ENCODE measurements at regions of chr20 and their contacts with region 1.

Region 1: GRCh38 chr20:20083807-20084206 is 31.5 kb downstream of the CFAP61 start:
- DNase-seq: peak in 1 of 2 donors; percentile 63
- ATAC-seq: peak; percentile 71 to 83 (median 79)
- H3K4me3 ChIP-seq: no peak overlapping the region
- H3K4me3 Mint-ChIP-seq: no peak overlapping the region
- H3K27ac ChIP-seq: no peak overlapping the region
- H3K27ac Mint-ChIP-seq: peak overlapping the region in 1 of 2 donors; percentile 65
- H3K4me1 ChIP-seq: peaks cover 4% of the 10 kb centered on the region
- H3K4me1 Mint-ChIP-seq: peaks cover 7 to 9% of the 10 kb centered on the region in 2 donors
- H3K27me3 ChIP-seq: peaks cover 2% of the 10 kb centered on the region
- H3K27me3 Mint-ChIP-seq: peaks cover 0 to 6% of the 10 kb centered on the region in 2 donors
- CTCF ChIP-seq: peak; percentile 75

Region 2: DNA sequence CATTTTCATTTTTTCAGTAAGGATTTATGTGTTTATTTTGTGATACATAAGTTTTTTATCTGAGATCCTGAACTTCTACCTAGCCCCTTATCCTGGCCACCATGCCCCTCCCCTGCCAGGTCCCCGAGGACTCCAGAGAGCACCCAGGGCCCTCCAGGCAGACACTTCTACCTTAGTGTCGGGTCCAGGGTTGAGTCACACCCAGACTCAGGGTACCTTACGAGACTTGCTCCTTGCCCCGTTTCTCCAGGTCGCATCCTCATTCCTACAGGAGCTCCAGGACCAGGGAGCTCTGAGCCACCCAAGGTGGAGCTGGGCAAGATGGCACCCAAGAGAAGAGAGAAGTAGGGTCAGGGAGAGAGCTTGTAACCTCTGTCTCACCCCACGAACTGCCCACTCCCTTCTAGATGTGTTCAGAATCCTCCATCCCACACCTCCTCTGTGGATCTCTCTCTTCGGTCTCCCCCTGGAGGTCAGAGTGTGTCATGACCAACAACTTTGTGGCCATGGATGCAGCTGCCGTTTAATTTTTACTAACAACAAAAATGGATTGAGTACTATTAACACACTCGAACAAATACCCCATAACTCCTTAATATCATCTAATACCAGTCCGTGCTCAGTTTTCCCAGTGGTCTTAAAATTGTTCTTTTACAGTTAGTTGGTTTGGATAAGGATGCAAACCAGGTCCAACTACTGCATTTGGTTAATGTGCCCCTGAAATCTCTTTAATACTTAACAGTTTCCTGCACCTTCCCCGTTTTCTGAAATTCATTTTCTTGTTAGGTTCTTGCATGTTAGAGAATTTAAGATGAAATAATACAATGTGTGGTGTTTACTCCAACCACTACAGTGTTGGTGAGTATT is 153.5 kb after region 1 on chr20:
- intact Hi-C with region 1: loop called (anchors 1 kb)
- DNase-seq: peak; percentile 40 to 62
- ATAC-seq: peak; percentile 79 to 98 (median 93)
- H3K4me3 ChIP-seq: no peak overlapping the region
- H3K4me3 Mint-ChIP-seq: no peak overlapping the region
- H3K27ac ChIP-seq: no peak overlapping the region
- H3K27ac Mint-ChIP-seq: peak overlapping the region; percentile 52 to 80
- H3K4me1 ChIP-seq: peaks cover 9% of the 10 kb centered on the region
- H3K4me1 Mint-ChIP-seq: peaks cover 12 to 20% of the 10 kb centered on the region in 2 donors
- H3K27me3 ChIP-seq: no peaks in the 10 kb centered on the region
- H3K27me3 Mint-ChIP-seq: no peaks in the 10 kb centered on the region
- CTCF ChIP-seq: peak; percentile 86

Region 3: DNA sequence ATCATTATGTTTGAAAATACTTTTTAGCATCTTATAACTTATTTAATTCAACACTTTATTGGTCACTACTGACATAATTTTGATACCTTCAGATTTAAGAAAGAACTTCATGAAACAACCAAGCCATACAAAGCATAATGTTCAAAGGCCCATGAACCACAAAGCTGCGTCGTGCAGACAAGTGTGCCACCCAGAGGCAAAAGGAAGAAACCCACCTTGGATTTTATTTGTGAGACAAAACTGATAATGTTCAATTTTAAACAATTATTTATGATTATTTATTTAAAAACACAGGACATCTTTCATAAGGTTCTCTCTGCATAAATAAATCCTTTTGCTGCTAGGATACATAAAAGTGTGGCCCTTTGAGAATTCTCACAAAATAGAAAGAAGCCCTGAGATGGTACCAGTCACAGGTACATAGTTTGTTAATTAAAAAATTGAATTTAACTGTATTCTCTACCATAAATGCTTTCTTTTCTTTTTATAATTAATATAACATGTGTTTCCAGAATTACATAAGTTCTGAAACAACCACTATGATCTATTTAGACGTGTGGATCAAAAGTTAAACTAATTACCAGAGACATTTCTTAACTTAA is 484.9 kb after region 1 on chr20:
- intact Hi-C with region 1: loop called (anchors 1 kb)
- DNase-seq: peak in 1 of 2 donors; percentile 56
- ATAC-seq: peak in 2 of 3 donors; percentile 40 to 62
- H3K4me3 ChIP-seq: no peak overlapping the region
- H3K4me3 Mint-ChIP-seq: no peak overlapping the region
- H3K27ac ChIP-seq: no peak overlapping the region
- H3K27ac Mint-ChIP-seq: no peak overlapping the region
- H3K4me1 ChIP-seq: no peaks in the 10 kb centered on the region
- H3K4me1 Mint-ChIP-seq: peaks cover 4 to 8% of the 10 kb centered on the region in 2 donors
- H3K27me3 ChIP-seq: no peaks in the 10 kb centered on the region
- H3K27me3 Mint-ChIP-seq: no peaks in the 10 kb centered on the region
- CTCF ChIP-seq: peak; percentile 77

Region 4: DNA sequence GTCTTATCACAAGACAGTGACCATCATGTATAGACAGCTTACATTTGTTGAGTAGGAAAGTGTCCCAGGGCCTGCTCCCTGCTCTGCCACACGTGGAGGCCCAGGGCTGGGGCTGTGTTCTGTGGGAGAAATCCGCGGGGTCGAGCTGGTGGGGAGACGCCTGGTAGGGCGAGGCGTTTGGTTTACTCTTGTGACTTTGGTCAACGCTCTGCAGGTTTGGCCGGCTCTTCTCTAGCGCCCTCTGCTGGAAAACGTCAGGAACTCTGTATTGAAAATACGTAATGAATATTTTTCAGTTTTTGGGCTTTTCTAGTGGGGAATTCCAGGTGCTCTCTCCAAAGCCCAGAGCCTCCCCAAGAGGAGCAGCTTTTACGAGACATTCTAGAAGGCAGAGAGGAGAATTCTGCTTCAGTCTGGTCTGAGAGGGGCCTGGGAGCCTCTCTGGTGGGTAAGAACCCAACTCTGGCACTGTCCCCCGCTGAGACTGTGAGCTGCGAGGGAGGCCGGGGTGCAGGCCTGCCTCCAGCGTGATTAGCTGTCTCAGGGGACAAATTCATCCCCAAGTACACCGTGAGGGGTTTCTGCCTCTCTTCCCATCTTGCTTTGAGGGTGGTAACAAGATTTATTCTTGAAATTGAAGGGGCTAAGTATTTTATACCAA is 741.2 kb after region 1 on chr20:
- intact Hi-C with region 1: loop called (anchors 10 kb)
- DNase-seq: peak; percentile 40 to 69
- ATAC-seq: peak; percentile 58 to 84 (median 75)
- H3K4me3 ChIP-seq: no peak overlapping the region
- H3K4me3 Mint-ChIP-seq: no peak overlapping the region
- H3K27ac ChIP-seq: no peak overlapping the region
- H3K27ac Mint-ChIP-seq: no peak overlapping the region
- H3K4me1 ChIP-seq: peaks cover 4% of the 10 kb centered on the region
- H3K4me1 Mint-ChIP-seq: peaks cover 5 to 6% of the 10 kb centered on the region in 2 donors
- H3K27me3 ChIP-seq: no peaks in the 10 kb centered on the region
- H3K27me3 Mint-ChIP-seq: peaks cover 13 to 25% of the 10 kb centered on the region in 2 donors
- CTCF ChIP-seq: peak; percentile 78